ENCODE measurements at regions of chr6 and their contacts with region 1.

Region 1: GRCh38 chr6:145621776-145622175 is 113.5 kb downstream of the EPM2A start:
- DNase-seq: no peak
- H3K4me3 Mint-ChIP-seq: no peak overlapping the region
- H3K27ac Mint-ChIP-seq: no peak overlapping the region
- H3K4me1 Mint-ChIP-seq: no peaks in the 10 kb centered on the region
- H3K27me3 Mint-ChIP-seq: no peaks in the 10 kb centered on the region

Region 2: DNA sequence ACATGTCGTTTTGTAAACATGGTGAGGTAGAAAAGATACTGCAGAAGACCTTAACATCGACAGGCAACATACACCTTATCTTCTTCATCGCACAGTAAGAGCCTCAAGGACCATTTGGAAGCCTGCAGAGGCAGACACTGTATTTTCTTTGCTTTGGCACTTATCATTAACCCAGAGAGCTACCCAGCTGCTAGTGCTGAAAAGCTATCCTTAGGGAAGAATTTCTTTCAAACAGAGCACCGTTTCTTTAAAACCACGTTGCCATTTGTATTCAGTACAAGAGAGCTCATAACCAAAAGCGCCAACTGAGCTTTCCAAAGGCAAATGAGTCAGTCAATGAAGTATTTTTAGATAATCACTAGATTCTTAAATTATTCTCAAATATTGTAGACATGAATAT is 193.1 kb before region 1 on chr6:
- CTCF ChIA-PET with region 1: no interaction called
- POLR2A ChIA-PET with region 1: no interaction called
- intact Hi-C with region 1: no loop called
- DNase-seq: no peak
- H3K4me3 Mint-ChIP-seq: no peak overlapping the region
- H3K27ac Mint-ChIP-seq: no peak overlapping the region
- H3K4me1 Mint-ChIP-seq: no peaks in the 10 kb centered on the region
- H3K27me3 Mint-ChIP-seq: no peaks in the 10 kb centered on the region

Region 3: DNA sequence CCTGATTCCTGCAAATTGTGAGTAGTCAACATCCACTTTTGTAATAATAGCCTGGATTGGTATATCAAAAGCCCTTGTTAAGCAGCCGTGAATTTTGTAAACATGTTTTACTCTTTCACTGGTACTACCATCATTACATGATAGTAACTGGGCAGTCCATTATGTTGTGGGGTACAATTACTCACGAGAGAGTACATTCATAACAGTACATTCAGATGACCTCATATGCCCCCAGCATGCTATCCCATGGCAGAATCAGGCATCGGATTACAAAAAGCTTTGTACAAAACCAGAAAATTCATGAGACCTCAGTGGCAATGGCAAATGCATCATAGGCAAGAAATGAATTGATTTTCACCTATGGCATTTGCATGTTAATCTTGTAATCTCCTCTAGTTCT is 52.6 kb before region 1 on chr6:
- CTCF ChIA-PET with region 1: no interaction called
- POLR2A ChIA-PET with region 1: no interaction called
- intact Hi-C with region 1: no loop called
- DNase-seq: no peak
- H3K4me3 Mint-ChIP-seq: no peak overlapping the region
- H3K27ac Mint-ChIP-seq: no peak overlapping the region
- H3K4me1 Mint-ChIP-seq: no peaks in the 10 kb centered on the region
- H3K27me3 Mint-ChIP-seq: no peaks in the 10 kb centered on the region

Region 4: GRCh38 chr6:145633981-145634627 is 12.3 kb after region 1 on chr6:
- CTCF ChIA-PET with region 1: interaction called, 32 read pairs
- POLR2A ChIA-PET with region 1: no interaction called
- intact Hi-C with region 1: no loop called
- DNase-seq: peak; percentile 84
- H3K4me3 Mint-ChIP-seq: no peak overlapping the region
- H3K27ac Mint-ChIP-seq: no peak overlapping the region
- H3K4me1 Mint-ChIP-seq: peaks cover 5% of the 10 kb centered on the region
- H3K27me3 Mint-ChIP-seq: no peaks in the 10 kb centered on the region

Region 5: DNA sequence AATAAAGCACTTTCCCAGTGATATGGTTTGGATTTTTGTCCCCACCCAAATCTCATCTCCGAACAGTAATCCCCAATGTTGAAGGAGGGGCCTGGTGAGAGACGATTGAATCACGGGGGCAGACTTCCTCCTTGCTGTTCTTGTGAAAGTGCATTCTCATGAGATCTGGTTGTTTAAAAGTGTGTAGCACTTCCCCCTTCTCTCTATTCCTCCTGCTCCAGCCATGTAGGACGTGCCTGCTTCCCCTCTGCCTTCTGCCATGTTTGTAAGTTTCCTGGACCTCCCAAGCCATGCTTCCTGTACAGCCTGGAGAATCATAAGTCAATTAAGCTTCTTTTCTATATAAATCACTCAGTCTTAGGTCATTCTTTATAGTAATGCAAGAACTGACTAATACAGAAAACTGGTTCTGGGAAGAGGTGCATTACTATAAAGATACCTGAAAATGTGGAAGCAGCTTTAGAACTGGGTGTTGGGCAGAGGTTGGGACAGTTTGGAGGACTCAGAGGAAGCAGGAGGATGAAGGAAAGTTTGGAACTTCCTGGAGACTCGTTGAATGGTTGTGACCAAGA is 106.1 kb after region 1 on chr6:
- CTCF ChIA-PET with region 1: no interaction called
- POLR2A ChIA-PET with region 1: no interaction called
- intact Hi-C with region 1: no loop called
- DNase-seq: no peak
- H3K4me3 Mint-ChIP-seq: no peak overlapping the region
- H3K27ac Mint-ChIP-seq: no peak overlapping the region
- H3K4me1 Mint-ChIP-seq: peaks cover 30% of the 10 kb centered on the region
- H3K27me3 Mint-ChIP-seq: no peaks in the 10 kb centered on the region

Measured in activated CD4-positive, alpha-beta memory T cell treated with anti-CD3 and anti-CD28 coated beads for 36 hours (primary cell).